Activated T-helper 2 cell treated with anti-CD3 and anti-CD28 coated beads, Interferon-gamma antibody, Interleukin-2, Interleukin-4, amounts not matched to agents 10 μg/mL and 5 μg/mL and 100 μg/mL, durations not matched to agents 14 hours and 24 hours and 36 hours (primary cell): ENCODE measurements at regions of chr3 and their contacts with region 1.

Region 1: GRCh38 chr3:124467980-124468902 is 262.0 kb upstream of the UMPS start:
- DNase-seq: peak; percentile 22
- H3K4me3 Mint-ChIP-seq: no peak overlapping the region
- H3K27ac Mint-ChIP-seq: no peak overlapping the region
- H3K4me1 Mint-ChIP-seq: no peaks in the 10 kb centered on the region
- H3K27me3 Mint-ChIP-seq: peaks cover 6% of the 10 kb centered on the region

Region 2: DNA sequence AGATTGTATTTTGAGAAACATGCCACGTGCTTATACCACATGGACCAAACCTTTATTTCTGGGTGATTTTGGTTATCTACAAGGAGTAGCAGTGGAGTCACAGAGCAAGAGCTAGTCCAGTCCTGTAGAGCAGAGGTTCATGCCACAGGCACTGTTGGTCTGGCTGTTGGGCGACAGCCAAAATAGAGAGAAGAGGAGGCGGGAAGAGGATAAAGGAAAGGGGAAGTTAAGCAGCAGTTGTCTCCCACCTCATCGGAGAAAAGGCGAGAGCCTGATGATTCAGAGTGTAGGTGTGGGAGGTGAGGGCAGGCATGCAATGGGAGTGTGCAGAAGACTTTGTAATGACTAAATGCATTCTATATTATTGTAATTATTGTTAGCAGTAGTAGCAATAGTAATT is 238.8 kb before region 1 on chr3:
- intact Hi-C with region 1: no loop called
- DNase-seq: no peak
- H3K4me3 Mint-ChIP-seq: no peak overlapping the region
- H3K27ac Mint-ChIP-seq: no peak overlapping the region
- H3K4me1 Mint-ChIP-seq: no peaks in the 10 kb centered on the region
- H3K27me3 Mint-ChIP-seq: peaks cover 3% of the 10 kb centered on the region

Region 3: GRCh38 chr3:124351430-124352148 is 116.7 kb before region 1 on chr3:
- intact Hi-C with region 1: loop called (anchors 5 kb)
- DNase-seq: no peak
- H3K4me3 Mint-ChIP-seq: no peak overlapping the region
- H3K27ac Mint-ChIP-seq: no peak overlapping the region
- H3K4me1 Mint-ChIP-seq: no peaks in the 10 kb centered on the region
- H3K27me3 Mint-ChIP-seq: peaks cover 9% of the 10 kb centered on the region